Head of caudate nucleus (tissue), 42 donors: ENCODE measurements at regions of chr10 and their contacts with region 1.

Region 1: DNA sequence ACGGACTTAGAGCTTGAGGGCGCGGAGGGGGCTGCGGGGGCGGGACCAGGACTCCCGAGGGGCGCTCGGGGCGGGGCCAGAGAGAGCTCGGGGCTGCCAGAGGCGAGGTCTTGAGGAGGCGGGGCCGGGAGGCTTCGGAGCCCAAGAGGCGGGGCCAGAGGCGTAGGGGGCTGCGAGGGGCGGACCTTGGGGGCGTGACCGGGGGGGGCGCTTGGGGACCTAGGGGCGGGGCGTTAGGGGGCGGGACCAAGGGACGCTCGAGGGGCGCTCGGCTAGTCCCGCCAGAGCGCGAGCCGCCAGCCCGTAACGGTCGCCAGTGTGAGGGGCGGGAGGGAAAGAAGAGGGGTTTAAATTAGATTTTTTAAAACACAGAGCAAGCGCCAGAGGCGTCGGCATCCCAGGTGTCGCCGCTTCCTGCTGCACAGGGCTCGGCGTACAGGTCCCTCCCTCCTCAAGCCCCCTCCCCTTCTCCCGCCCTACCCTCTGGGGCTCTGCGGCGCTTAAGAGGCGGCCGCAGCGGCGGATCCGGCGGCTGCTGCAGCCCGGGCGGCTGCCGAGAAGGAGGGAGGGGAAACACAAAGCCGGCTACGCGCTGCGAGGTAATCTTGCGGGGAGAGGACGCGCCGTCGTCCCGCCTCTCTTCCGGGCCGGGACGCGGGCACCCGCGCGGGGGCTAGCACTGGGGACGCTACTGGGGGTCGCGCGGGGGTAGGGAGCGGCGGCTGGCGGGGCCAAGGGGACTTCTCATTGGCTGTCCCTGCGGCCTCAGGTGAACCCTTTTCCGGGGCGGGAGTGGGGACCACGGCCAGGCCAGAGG is at the start of gene ADD3:
- DNase-seq: peak; percentile 90 to 99 (median 97)

Region 2: GRCh38 chr10:109852475-109853037 is 155.4 kb before region 1 on chr10:
- intact Hi-C with region 1: no loop called
- DNase-seq: peak; percentile 63 to 93 (median 86)

Region 3: GRCh38 chr10:110076559-110077318 is 68.8 kb after region 1 on chr10:
- intact Hi-C with region 1: loop called (anchors 2 kb)
- DNase-seq: peak in 1 of 42 donors; percentile 39